Esophagus muscularis mucosa (tissue), 4 donors: ENCODE measurements at regions of chr14 and their contacts with region 1.

Region 1: GRCh38 chr14:32252030-32252670 is 49.1 kb upstream of the RNU6-8 start:
- DNase-seq: peak; percentile 68
- H3K4me3 ChIP-seq: no peak overlapping the region
- H3K27ac ChIP-seq: peak overlapping the region; percentile 28 to 65 (median 60)
- H3K4me1 ChIP-seq: peaks cover 16 to 42% (median 40%) of the 10 kb centered on the region in 4 donors
- H3K27me3 ChIP-seq: no peaks in the 10 kb centered on the region
- CTCF ChIP-seq: peak; percentile 80 to 85 (median 85)
- EP300 ChIP-seq: no peak
- POLR2A ChIP-seq: no peak

Region 2: DNA sequence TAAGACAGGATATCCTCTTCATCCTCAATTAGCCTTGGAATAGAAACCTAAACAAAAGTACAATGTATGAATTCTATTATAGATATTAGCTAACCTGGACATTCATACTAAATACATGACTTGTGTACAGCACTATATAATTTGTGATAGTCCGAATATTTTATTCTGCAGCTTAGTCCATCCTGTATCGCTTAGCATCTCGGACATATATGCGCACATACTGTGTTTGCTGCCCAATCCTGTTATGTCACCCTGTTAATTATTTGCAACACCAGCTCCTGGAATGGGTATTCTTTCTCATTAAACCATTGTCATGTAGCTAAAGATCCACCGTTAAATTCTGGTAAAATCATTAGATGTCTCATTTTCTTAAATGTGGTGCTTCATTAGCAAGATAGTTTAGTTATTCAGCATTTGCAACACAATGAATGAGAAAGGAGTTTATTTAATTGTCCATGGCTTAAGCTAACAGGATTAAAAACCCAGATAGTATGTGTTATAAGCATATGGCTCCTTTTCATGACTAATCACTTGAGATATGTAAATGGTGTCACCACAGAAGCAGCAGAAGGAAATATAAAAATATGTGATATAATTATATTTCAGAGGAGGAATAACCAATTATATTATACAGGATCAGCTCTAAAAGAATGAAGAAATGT is 331.0 kb before region 1 on chr14:
- intact Hi-C with region 1: loop called (anchors 5 kb)
- DNase-seq: no peak
- H3K4me3 ChIP-seq: no peak overlapping the region
- H3K27ac ChIP-seq: no peak overlapping the region
- H3K4me1 ChIP-seq: peaks cover 0 to under 1% (median under 1%) of the 10 kb centered on the region in 4 donors
- H3K27me3 ChIP-seq: no peaks in the 10 kb centered on the region
- CTCF ChIP-seq: no peak
- EP300 ChIP-seq: no peak
- POLR2A ChIP-seq: no peak

Region 3: GRCh38 chr14:32076278-32077080 is 175.7 kb before region 1 on chr14:
- intact Hi-C with region 1: loop called (anchors 2 kb)
- DNase-seq: peak; percentile 97
- H3K4me3 ChIP-seq: peak overlapping the region; percentile 73 to 100 (median 88)
- H3K27ac ChIP-seq: peak overlapping the region; percentile 98 to 100 (median 100)
- H3K4me1 ChIP-seq: peaks cover 7 to 63% (median 57%) of the 10 kb centered on the region in 4 donors
- H3K27me3 ChIP-seq: no peaks in the 10 kb centered on the region
- CTCF ChIP-seq: no peak
- EP300 ChIP-seq: no peak
- POLR2A ChIP-seq: peak; percentile 53

Region 4: GRCh38 chr14:32469388-32470160 is 217.4 kb after region 1 on chr14:
- intact Hi-C with region 1: loop called (anchors 5 kb)
- DNase-seq: no peak
- H3K4me3 ChIP-seq: no peak overlapping the region
- H3K27ac ChIP-seq: peak overlapping the region; percentile 73 to 84 (median 77)
- H3K4me1 ChIP-seq: peaks cover 41 to 68% (median 63%) of the 10 kb centered on the region in 4 donors
- H3K27me3 ChIP-seq: no peaks in the 10 kb centered on the region
- CTCF ChIP-seq: peak; percentile 50 to 65 (median 61)
- EP300 ChIP-seq: no peak
- POLR2A ChIP-seq: no peak

Region 5: DNA sequence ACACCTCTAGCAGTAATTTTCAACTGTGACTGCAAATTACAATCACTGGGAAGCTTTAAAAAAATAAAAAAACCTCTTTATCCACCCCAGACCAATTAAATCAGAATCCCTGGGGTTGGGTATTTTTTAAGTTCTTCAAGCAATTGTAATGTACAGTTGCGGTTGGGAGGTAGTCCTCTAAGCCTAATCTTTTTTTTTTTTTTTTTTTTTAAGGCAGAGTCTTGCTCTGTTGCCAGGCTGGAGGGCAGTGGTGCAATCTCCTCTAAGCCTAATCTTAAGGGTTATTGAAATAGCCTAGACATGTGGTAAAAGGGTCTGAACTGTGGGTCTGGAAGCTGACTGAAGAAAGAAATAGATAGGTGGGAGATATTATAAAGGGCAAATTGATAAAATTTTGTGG is 307.4 kb after region 1 on chr14:
- intact Hi-C with region 1: loop called (anchors 5 kb)
- DNase-seq: no peak
- H3K4me3 ChIP-seq: no peak overlapping the region
- H3K27ac ChIP-seq: peak overlapping the region in 3 of 4 donors; percentile 36 to 81 (median 77)
- H3K4me1 ChIP-seq: peaks cover 24 to 39% (median 31%) of the 10 kb centered on the region in 4 donors
- H3K27me3 ChIP-seq: no peaks in the 10 kb centered on the region
- CTCF ChIP-seq: no peak
- EP300 ChIP-seq: no peak
- POLR2A ChIP-seq: no peak